SK-N-SH (cell line): ENCODE measurements at regions of chr11 and their contacts with region 1.

Region 1: GRCh38 chr11:72091005-72091691 is 10.5 kb downstream of the LRRC51 start:
- DNase-seq: peak; percentile 78
- H3K4me3 ChIP-seq: no peak overlapping the region; a peak in 1 of 4 replicates
- H3K27ac ChIP-seq: no peak overlapping the region
- H3K4me1 ChIP-seq: peaks cover 0 to 16% of the 10 kb centered on the region in 2 experiments; a peak in 2 of 4 replicates
- H3K27me3 ChIP-seq: no peaks in the 10 kb centered on the region
- CTCF ChIP-seq: peak; percentile 88
- EP300 ChIP-seq: no peak
- RAD21 ChIP-seq: peak; percentile 86

Region 2: GRCh38 chr11:72040726-72041441 is 50.3 kb before region 1 on chr11:
- CTCF ChIA-PET with region 1: interaction called, 30 read pairs
- POLR2A ChIA-PET with region 1: interaction called, 7 read pairs
- DNase-seq: peak; percentile 75
- H3K4me3 ChIP-seq: peak overlapping the region; percentile 64 to 67
- H3K27ac ChIP-seq: peak overlapping the region; percentile 97 to 99
- H3K4me1 ChIP-seq: peaks cover 18 to 45% of the 10 kb centered on the region in 2 experiments
- H3K27me3 ChIP-seq: no peaks in the 10 kb centered on the region
- CTCF ChIP-seq: no peak
- EP300 ChIP-seq: no peak
- RAD21 ChIP-seq: no peak

Region 3: DNA sequence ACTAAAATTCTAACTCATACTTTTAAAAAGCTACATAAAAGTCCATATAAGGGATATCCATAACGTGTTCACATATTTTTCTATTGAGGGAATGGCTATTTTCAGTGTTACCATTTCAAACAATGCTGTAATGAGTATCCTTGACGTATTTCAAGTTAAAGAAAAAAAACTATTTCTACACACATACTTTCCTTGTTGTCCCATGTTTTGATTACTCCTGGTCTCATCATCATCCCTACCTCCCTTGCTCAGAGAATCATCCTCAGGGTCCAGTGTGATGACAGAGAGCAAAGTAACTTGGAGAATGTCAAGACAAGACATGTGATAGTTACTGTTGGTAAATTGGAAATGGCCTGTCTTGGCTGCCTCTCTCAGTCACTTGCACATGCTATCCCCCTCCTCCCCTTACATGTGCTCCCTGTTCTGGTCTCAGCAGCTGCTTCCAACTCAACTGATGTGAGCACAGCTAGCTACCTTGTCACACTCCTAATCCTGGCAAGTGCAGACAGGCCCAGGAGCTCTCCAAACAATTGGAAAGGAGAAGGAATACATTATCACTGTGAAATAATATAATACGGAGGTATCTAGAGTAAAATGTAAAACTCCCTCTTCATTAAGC is 32.6 kb before region 1 on chr11:
- CTCF ChIA-PET with region 1: interaction called, 14 read pairs
- POLR2A ChIA-PET with region 1: no interaction called
- DNase-seq: no peak
- H3K4me3 ChIP-seq: no peak overlapping the region
- H3K27ac ChIP-seq: 0 out of 4 replicates have a peak overlapping the region, but pooled peaks of 1 of the 2 experiments have one; percentile 2
- H3K4me1 ChIP-seq: no peaks in the 10 kb centered on the region; a peak in 1 of 4 replicates
- H3K27me3 ChIP-seq: no peaks in the 10 kb centered on the region
- CTCF ChIP-seq: no peak
- EP300 ChIP-seq: no peak
- RAD21 ChIP-seq: no peak

Region 4: GRCh38 chr11:72080256-72080974 is 10.7 kb before region 1 on chr11 and contains the starts of genes LRRC51 and NUMA1:
- CTCF ChIA-PET with region 1: interaction called, 22 read pairs
- POLR2A ChIA-PET with region 1: interaction called, 3 read pairs
- DNase-seq: peak; percentile 92
- H3K4me3 ChIP-seq: peak within 1 kb of the TSS; percentile 70 to 78
- H3K27ac ChIP-seq: peak within 1 kb of the TSS; percentile 88
- H3K4me1 ChIP-seq: peaks cover 8 to 19% of the 10 kb centered on the region in 2 experiments; a peak in 3 of 4 replicates
- H3K27me3 ChIP-seq: no peaks in the 10 kb centered on the region
- CTCF ChIP-seq: no peak
- EP300 ChIP-seq: no peak; a peak in 1 of 4 replicates
- RAD21 ChIP-seq: no peak
- polyA plus RNA-seq, gene LRRC51: 7.3 and 8.0 TPM in 2 replicates
- polyA plus RNA-seq, gene NUMA1: 111 TPM in 2 replicates

Region 5: GRCh38 chr11:72102946-72103753 is 12.0 kb after region 1 on chr11 and contains the start of gene LAMTOR1:
- CTCF ChIA-PET with region 1: interaction called, 36 read pairs
- POLR2A ChIA-PET with region 1: interaction called, 4 read pairs
- DNase-seq: peak; percentile 98
- H3K4me3 ChIP-seq: peak within 1 kb of the TSS; percentile 88 to 89
- H3K27ac ChIP-seq: peak within 1 kb of the TSS; percentile 89 to 97
- H3K4me1 ChIP-seq: peaks cover 4 to 28% of the 10 kb centered on the region in 2 experiments; a peak in 2 of 4 replicates
- H3K27me3 ChIP-seq: no peaks in the 10 kb centered on the region
- CTCF ChIP-seq: peak; percentile 50
- EP300 ChIP-seq: peak; percentile 4 to 31; a peak in 1 of 4 replicates
- RAD21 ChIP-seq: peak; percentile 37
- polyA plus RNA-seq, gene LAMTOR1: 128 and 129 TPM in 2 replicates

Region 6: DNA sequence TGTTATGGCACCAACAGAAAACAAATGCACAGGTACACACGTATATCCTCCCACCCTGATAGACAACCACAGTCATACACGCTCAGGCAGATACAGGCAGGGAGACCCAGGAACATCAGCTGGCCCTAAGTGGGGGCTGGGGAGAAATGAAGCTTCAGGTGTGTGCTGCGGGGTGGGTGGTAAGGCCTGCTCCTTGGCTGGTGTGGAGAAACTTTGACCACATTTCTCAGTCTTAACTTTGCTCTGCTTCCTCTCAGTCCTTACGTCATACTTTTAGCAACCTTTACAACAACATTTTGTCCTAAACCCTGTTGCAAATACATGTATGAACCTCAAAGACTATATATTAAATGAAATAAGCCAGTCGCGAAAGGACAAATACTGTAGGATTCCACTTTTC is 28.1 kb after region 1 on chr11:
- CTCF ChIA-PET with region 1: no interaction called
- POLR2A ChIA-PET with region 1: no interaction called
- DNase-seq: no peak
- H3K4me3 ChIP-seq: no peak overlapping the region
- H3K27ac ChIP-seq: no peak overlapping the region
- H3K4me1 ChIP-seq: no peaks in the 10 kb centered on the region
- H3K27me3 ChIP-seq: no peaks in the 10 kb centered on the region; the same call in 1 of the 2 replicates
- CTCF ChIP-seq: no peak
- EP300 ChIP-seq: no peak
- RAD21 ChIP-seq: no peak

Region 7: GRCh38 chr11:72189461-72190275 is 98.5 kb after region 1 on chr11:
- CTCF ChIA-PET with region 1: no interaction called
- POLR2A ChIA-PET with region 1: no interaction called
- DNase-seq: peak; percentile 27
- H3K4me3 ChIP-seq: no peak overlapping the region
- H3K27ac ChIP-seq: peak overlapping the region in 1 of 2 experiments; percentile 3; a peak in 1 of 4 replicates
- H3K4me1 ChIP-seq: peaks cover 0 to 12% of the 10 kb centered on the region in 2 experiments; a peak in 1 of 4 replicates
- H3K27me3 ChIP-seq: no peaks in the 10 kb centered on the region
- CTCF ChIP-seq: no peak
- EP300 ChIP-seq: no peak
- RAD21 ChIP-seq: no peak

Region 8: DNA sequence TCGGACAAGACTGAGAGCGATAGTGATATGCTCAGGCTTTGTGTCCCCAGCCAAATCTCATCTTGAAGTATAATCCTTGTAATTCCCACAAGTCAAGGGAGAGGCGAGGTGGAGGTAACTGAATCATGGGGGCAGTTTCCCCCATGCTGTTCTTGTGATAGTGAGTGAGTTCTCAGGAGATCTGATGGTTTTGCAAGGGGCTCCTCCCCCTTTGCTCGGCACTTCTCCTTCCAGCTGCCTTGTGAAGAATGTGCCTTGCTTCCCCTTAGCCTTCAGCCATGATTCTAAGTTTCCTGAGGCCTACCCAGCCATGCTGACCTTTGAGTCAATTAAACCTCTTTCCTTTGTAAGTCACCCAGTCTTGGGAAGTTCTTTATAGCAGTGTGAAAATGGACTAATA is 118.0 kb after region 1 on chr11:
- CTCF ChIA-PET with region 1: no interaction called
- POLR2A ChIA-PET with region 1: no interaction called
- DNase-seq: no peak
- H3K4me3 ChIP-seq: no peak overlapping the region
- H3K27ac ChIP-seq: no peak overlapping the region
- H3K4me1 ChIP-seq: no peaks in the 10 kb centered on the region
- H3K27me3 ChIP-seq: peaks cover 13% of the 10 kb centered on the region; the same call in 1 of the 2 replicates
- CTCF ChIP-seq: no peak
- EP300 ChIP-seq: no peak
- RAD21 ChIP-seq: no peak